ENCODE measurements at regions of chr10 and their contacts with region 1.

Region 1: GRCh38 chr10:33279811-33280602 is 54.5 kb downstream of the NRP1 start:
- DNase-seq: no peak
- H3K4me3 ChIP-seq: no peak overlapping the region
- CTCF ChIP-seq: no peak

Region 2: GRCh38 chr10:33180390-33180789 is 99.6 kb before region 1 on chr10:
- in situ Hi-C with region 1: no loop called
- DNase-seq: no peak
- H3K4me3 ChIP-seq: no peak overlapping the region
- CTCF ChIP-seq: no peak

Region 3: DNA sequence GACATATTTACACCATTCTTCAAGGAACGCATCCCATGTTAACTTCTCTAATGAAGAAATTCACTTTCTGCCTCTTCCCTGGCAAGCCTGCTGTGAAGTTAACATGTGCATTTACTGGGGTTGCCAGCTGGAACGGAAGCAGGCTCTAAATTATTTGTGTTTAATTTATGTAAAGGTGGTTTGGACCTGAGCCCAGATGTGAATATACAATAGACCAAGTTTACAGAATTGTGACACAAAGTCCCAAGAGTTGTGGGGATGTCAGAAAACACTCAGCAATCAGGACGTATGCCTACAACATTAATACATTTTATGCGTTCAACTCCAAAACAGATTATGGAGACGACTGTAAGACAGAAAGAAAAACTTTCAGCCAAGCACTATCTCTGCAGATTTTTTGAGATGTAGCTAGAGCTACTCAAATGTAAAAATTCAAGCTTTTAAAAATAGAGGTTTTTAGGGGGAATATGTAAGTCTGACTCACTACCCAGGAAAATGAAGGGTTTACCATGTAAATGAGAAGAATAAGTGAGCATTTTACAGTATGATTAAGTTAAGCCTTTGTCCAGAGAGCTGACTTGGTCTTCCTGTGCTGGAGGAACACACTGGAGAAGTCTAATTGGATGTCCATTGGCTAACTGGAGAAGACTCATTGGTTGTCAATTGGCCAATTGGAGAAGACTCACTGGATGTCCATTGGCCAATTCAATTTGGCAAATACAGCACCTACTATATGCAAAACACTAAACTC is 35.0 kb after region 1 on chr10:
- in situ Hi-C with region 1: loop called (anchors 5 kb)
- DNase-seq: peak; percentile 55
- H3K4me3 ChIP-seq: no peak overlapping the region
- CTCF ChIP-seq: no peak

Region 4: GRCh38 chr10:33808475-33808874 is 528.5 kb after region 1 on chr10:
- in situ Hi-C with region 1: no loop called
- DNase-seq: no peak
- H3K4me3 ChIP-seq: no peak overlapping the region
- CTCF ChIP-seq: no peak

Measured in astrocyte of the cerebellum (primary cell).